ENCODE measurements at regions of chr4 and their contacts with region 1.

Region 1: GRCh38 chr4:110287130-110287529 is 88.7 kb upstream of the ELOVL6 start:
- DNase-seq: peak; percentile 71
- H3K4me3 Mint-ChIP-seq: no peak overlapping the region
- H3K27ac Mint-ChIP-seq: peak overlapping the region; percentile 42
- H3K4me1 Mint-ChIP-seq: peaks cover 3% of the 10 kb centered on the region
- H3K27me3 Mint-ChIP-seq: peaks cover 42% of the 10 kb centered on the region

Region 2: GRCh38 chr4:108972613-108973283 is 1314.4 kb before region 1 on chr4:
- intact Hi-C with region 1: loop called (anchors 5 kb)
- DNase-seq: peak; percentile 77
- H3K4me3 Mint-ChIP-seq: peak overlapping the region; percentile 63
- H3K27ac Mint-ChIP-seq: peak overlapping the region; percentile 86
- H3K4me1 Mint-ChIP-seq: peaks cover 31% of the 10 kb centered on the region
- H3K27me3 Mint-ChIP-seq: no peaks in the 10 kb centered on the region

Region 3: DNA sequence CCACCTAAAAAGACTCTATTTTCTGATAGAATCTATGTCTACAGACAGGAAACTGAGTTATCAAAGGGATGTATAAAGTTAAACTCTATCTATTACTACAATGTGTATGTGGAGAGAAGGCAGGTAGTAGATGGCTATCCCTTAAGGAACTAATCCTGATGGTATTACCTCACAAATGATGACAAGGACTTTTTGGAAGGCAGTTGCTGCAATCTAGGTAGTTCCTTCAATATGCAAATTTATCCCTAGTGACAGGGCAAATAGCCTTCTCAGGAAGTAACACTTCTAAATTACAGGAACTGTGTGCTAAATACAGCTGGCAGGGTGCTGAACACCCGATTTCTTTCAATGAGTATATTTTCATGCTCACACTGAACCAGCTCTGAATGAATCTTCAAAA is 1162.0 kb before region 1 on chr4:
- intact Hi-C with region 1: no loop called
- DNase-seq: no peak
- H3K4me3 Mint-ChIP-seq: no peak overlapping the region
- H3K27ac Mint-ChIP-seq: no peak overlapping the region
- H3K4me1 Mint-ChIP-seq: no peaks in the 10 kb centered on the region
- H3K27me3 Mint-ChIP-seq: peaks cover 21% of the 10 kb centered on the region

Region 4: DNA sequence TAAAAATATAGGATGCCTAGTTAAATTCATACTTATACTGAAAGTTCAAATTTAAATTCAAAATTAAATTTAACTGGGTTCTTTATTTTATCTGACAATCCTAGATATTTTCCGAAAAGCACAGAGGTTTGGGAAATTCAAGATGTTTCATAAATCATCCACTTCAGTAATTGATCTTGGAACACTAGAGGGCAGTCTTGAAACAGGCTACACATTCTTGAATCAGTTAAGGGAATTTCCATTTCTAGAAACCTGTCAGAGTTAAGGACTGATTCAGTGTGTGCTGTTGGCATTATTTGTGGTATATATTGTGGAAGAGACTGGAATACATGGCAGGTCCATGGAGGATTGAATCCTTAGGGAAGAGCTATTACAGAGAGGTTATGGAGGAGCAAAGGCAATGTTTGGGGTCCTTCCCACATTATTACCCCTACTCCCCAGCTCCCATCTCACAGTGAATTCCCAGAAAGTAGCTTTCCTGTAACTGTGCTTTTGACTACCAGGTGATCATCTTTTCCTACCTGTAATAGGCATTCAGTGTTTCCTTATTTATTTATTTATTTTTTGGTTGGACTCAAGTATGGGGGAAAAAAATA is 281.6 kb before region 1 on chr4:
- intact Hi-C with region 1: loop called (anchors 10 kb)
- DNase-seq: peak; percentile 80
- H3K4me3 Mint-ChIP-seq: no peak overlapping the region
- H3K27ac Mint-ChIP-seq: no peak overlapping the region
- H3K4me1 Mint-ChIP-seq: peaks cover 19% of the 10 kb centered on the region
- H3K27me3 Mint-ChIP-seq: peaks cover 7% of the 10 kb centered on the region

Region 5: GRCh38 chr4:110055158-110055768 is 231.9 kb before region 1 on chr4:
- intact Hi-C with region 1: loop called (anchors 2 kb)
- DNase-seq: peak; percentile 82
- H3K4me3 Mint-ChIP-seq: peak overlapping the region; percentile 67
- H3K27ac Mint-ChIP-seq: peak overlapping the region; percentile 74
- H3K4me1 Mint-ChIP-seq: peaks cover 62% of the 10 kb centered on the region
- H3K27me3 Mint-ChIP-seq: no peaks in the 10 kb centered on the region

Region 6: DNA sequence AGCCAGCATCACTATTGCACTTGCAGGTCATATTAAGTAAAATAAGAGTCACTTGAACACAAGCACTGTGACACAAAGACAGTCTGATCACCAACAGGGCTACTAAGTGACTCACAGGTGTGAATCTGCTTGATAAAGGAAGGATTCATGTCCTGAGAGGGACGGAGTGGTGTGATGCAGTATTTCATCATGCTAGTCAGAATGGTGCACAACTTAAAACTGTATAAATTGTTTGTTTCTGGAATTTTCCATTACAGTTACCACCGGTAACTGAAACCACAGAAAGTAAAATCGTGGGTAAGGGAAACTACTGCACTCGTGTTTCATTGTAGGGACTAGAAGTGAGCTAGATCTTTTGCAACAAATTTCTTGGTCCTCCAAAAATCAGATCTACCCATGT is 198.5 kb before region 1 on chr4:
- intact Hi-C with region 1: loop called (anchors 1 kb)
- DNase-seq: peak; percentile 84
- H3K4me3 Mint-ChIP-seq: peak overlapping the region; percentile 77
- H3K27ac Mint-ChIP-seq: peak overlapping the region; percentile 91
- H3K4me1 Mint-ChIP-seq: peaks cover 55% of the 10 kb centered on the region
- H3K27me3 Mint-ChIP-seq: no peaks in the 10 kb centered on the region

Region 7: GRCh38 chr4:110268352-110268751 is 18.8 kb before region 1 on chr4:
- intact Hi-C with region 1: loop called (anchors 1 kb)
- DNase-seq: peak; percentile 62
- H3K4me3 Mint-ChIP-seq: no peak overlapping the region
- H3K27ac Mint-ChIP-seq: no peak overlapping the region
- H3K4me1 Mint-ChIP-seq: peaks cover 10% of the 10 kb centered on the region
- H3K27me3 Mint-ChIP-seq: peaks cover 21% of the 10 kb centered on the region